ENCODE measurements at regions of chr4 and their contacts with region 1.

Region 1: DNA sequence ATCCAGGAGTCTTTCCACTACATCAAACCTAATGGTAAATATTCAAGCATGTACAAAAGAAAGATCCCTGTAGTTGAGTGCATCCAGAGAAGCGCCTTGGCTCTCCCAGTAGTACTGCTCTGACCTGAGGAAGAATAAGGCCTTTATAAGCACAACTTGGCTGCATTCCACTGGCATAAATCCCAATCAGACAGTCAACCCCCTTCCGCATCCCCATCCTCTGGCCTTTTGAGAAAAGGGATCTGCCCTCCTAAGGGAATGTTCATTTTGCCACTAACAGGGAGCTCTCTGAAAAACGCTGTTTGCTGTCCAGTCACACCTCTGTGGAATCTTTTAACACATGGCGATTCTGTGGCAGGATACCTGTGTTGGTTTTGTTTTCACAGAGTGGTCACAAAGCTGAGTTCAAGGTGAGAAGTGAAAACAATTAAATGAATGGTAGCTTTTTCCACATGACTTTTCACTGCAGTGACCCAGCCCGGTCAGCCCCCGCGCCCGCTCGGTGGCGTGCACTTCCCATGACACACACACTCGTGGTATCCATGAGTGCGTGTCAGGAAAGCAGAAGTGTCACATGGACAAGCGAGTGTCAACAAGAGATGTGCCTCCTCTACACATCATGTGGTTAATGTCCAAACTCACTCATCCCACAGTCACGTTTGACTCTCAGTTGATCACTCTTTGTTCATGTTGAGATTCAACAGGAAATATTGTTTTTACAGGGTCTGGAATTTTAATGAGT is 112.2 kb upstream of the ENPP6 start:
- DNase-seq: no peak
- ATAC-seq: peak; percentile 26
- H3K4me3 Mint-ChIP-seq: peak overlapping the region; percentile 47
- H3K27ac Mint-ChIP-seq: peak overlapping the region; percentile 97
- H3K4me1 Mint-ChIP-seq: peaks cover 78% of the 10 kb centered on the region
- H3K27me3 Mint-ChIP-seq: no peaks in the 10 kb centered on the region
- CTCF ChIP-seq: no peak

Region 2: DNA sequence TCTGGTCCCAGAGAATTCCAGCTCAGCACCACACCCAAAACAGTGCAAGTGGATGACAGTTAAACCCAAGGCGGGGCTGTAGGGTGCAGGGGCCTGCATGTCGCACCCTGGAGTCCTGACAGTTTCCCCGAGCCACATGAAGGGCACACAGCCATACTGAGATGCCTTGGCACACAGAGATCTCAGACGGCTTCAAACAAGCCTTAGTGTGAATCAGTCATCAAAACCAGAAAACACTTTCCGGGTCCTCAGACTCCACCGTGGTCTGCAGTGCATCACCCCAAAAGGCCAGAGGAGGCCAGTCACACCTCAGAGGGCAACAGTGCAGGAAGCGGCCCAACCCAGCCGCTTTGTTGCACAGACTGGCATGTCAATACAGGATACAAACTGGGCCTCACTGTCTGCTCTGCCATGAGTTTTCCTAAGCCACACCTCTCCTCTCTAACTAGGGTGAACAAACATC is 47.5 kb before region 1 on chr4:
- CTCF ChIA-PET with region 1: interaction called, 8 read pairs
- POLR2A ChIA-PET with region 1: interaction called, 48 read pairs
- intact Hi-C with region 1: loop called (anchors 1 kb)
- DNase-seq: no peak
- ATAC-seq: peak; percentile 40
- H3K4me3 Mint-ChIP-seq: peak overlapping the region; percentile 32
- H3K27ac Mint-ChIP-seq: peak overlapping the region; percentile 83
- H3K4me1 Mint-ChIP-seq: peaks cover 66% of the 10 kb centered on the region
- H3K27me3 Mint-ChIP-seq: no peaks in the 10 kb centered on the region
- CTCF ChIP-seq: no peak

Region 3: DNA sequence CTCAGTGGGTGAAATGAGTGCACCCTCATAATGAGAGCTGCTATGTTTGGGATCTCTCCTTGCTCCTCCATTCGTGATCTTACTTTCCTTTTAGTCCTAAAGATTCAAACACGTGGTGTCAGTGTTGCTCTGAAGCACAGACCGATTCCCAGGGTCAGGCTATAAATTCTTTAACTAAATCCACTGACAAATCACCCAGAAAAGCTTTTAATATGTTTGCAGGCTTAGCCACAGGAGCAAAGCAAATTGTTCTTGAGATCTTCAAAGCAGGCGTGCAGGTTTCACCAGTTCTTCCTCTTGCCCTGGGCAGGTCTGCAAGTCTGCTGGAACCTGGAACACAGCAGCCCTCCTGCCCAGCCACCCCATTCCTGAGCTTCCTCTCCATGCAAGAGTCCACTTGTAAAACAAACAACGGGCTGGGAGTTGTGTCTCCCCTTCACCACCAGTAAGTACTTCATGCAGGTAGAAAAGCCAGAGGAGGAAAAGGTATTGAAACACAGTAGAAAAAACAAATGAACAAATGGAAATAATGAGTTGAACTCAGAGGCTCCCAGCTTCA is 42.1 kb before region 1 on chr4:
- CTCF ChIA-PET with region 1: interaction called, 8 read pairs
- POLR2A ChIA-PET with region 1: interaction called, 48 read pairs
- intact Hi-C with region 1: loop called (anchors 1 kb)
- DNase-seq: no peak
- ATAC-seq: no peak
- H3K4me3 Mint-ChIP-seq: peak overlapping the region; percentile 77
- H3K27ac Mint-ChIP-seq: peak overlapping the region; percentile 91
- H3K4me1 Mint-ChIP-seq: peaks cover 61% of the 10 kb centered on the region
- H3K27me3 Mint-ChIP-seq: no peaks in the 10 kb centered on the region
- CTCF ChIP-seq: no peak

Region 4: GRCh38 chr4:184310171-184310567 is 19.7 kb before region 1 on chr4:
- CTCF ChIA-PET with region 1: interaction called, 11 read pairs
- POLR2A ChIA-PET with region 1: interaction called, 211 read pairs
- intact Hi-C with region 1: loop called (anchors 1 kb)
- DNase-seq: no peak
- ATAC-seq: peak; percentile 23
- H3K4me3 Mint-ChIP-seq: no peak overlapping the region
- H3K27ac Mint-ChIP-seq: peak overlapping the region; percentile 51
- H3K4me1 Mint-ChIP-seq: peaks cover 61% of the 10 kb centered on the region
- H3K27me3 Mint-ChIP-seq: no peaks in the 10 kb centered on the region
- CTCF ChIP-seq: no peak

Region 5: DNA sequence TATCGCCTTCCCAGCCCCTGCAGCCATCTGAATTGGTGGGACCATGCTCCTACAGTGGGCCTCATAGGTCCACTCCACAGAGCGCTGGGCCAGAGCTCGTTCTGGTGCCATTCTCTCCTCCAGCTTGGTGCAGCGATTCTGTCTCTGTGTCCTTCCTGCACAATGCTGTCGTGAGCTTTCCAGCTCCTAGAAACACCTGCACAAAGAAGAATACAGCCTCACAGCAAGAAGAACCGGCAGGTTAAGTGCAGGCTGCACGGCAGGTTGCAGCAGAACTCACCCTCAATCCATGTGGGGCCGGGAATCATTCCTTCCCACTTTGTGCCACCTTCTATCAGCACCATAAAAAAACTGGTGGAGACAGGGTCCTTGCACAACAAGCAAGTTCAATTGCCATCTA is 11.0 kb before region 1 on chr4:
- CTCF ChIA-PET with region 1: interaction called, 11 read pairs
- POLR2A ChIA-PET with region 1: interaction called, 211 read pairs
- intact Hi-C with region 1: loop called (anchors 1 kb)
- DNase-seq: no peak
- ATAC-seq: no peak
- H3K4me3 Mint-ChIP-seq: peak overlapping the region; percentile 24
- H3K27ac Mint-ChIP-seq: peak overlapping the region; percentile 98
- H3K4me1 Mint-ChIP-seq: peaks cover 73% of the 10 kb centered on the region
- H3K27me3 Mint-ChIP-seq: no peaks in the 10 kb centered on the region
- CTCF ChIP-seq: no peak

Region 6: GRCh38 chr4:184384056-184384809 is 54.4 kb after region 1 on chr4:
- CTCF ChIA-PET with region 1: interaction called, 3 read pairs
- POLR2A ChIA-PET with region 1: interaction called, 15 read pairs
- intact Hi-C with region 1: loop called (anchors 1 kb)
- DNase-seq: no peak
- ATAC-seq: peak; percentile 36
- H3K4me3 Mint-ChIP-seq: peak overlapping the region; percentile 72
- H3K27ac Mint-ChIP-seq: peak overlapping the region; percentile 79
- H3K4me1 Mint-ChIP-seq: peaks cover 88% of the 10 kb centered on the region
- H3K27me3 Mint-ChIP-seq: no peaks in the 10 kb centered on the region
- CTCF ChIP-seq: no peak

Region 7: DNA sequence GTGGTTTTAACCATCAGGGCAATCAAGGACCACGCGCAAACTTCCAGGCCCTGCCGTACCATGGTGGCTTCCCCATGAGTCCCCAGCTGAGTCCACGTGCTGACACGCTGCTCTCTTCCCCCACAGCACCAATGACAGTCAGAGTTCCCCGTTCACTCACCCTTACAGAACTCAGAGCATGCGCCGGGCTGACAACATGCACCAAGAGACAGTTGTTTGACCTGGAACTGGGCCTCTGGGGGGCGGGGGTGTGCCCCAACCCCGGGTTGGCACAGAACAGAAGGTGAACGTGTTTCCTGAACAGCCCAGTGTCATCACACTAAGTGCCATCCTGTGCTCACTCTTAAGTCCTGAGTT is 115.1 kb after region 1 on chr4:
- CTCF ChIA-PET with region 1: no interaction called
- POLR2A ChIA-PET with region 1: interaction called, 11 read pairs
- intact Hi-C with region 1: no loop called
- DNase-seq: peak; percentile 42
- ATAC-seq: peak; percentile 92
- H3K4me3 Mint-ChIP-seq: peak overlapping the region; percentile 38
- H3K27ac Mint-ChIP-seq: peak overlapping the region; percentile 83
- H3K4me1 Mint-ChIP-seq: peaks cover 95% of the 10 kb centered on the region
- H3K27me3 Mint-ChIP-seq: no peaks in the 10 kb centered on the region
- CTCF ChIP-seq: no peak

Measured in activated B cell treated with CpG ODN at 0.5 μM for 24 hours (primary cell).